ENCODE measurements at regions of chr21 and their contacts with region 1.

Region 1: GRCh38 chr21:34745557-34746255 is 76.9 kb downstream of the CLIC6 start:
- DNase-seq: peak; percentile 74
- ATAC-seq: peak; percentile 99
- H3K4me3 Mint-ChIP-seq: no peak overlapping the region
- H3K27ac Mint-ChIP-seq: no peak overlapping the region
- H3K4me1 Mint-ChIP-seq: peaks cover 3% of the 10 kb centered on the region; the same call in 1 of the 2 replicates
- H3K27me3 Mint-ChIP-seq: no peaks in the 10 kb centered on the region
- CTCF ChIP-seq: peak; percentile 77

Region 2: GRCh38 chr21:34762761-34763160 is 17.1 kb after region 1 on chr21:
- CTCF ChIA-PET with region 1: interaction called, 25 read pairs
- POLR2A ChIA-PET with region 1: no interaction called
- DNase-seq: no peak
- ATAC-seq: no peak
- H3K4me3 Mint-ChIP-seq: no peak overlapping the region
- H3K27ac Mint-ChIP-seq: no peak overlapping the region
- H3K4me1 Mint-ChIP-seq: no peaks in the 10 kb centered on the region
- H3K27me3 Mint-ChIP-seq: peaks cover 2% of the 10 kb centered on the region
- CTCF ChIP-seq: no peak

Region 3: GRCh38 chr21:34795175-34795547 is 49.5 kb after region 1 on chr21:
- CTCF ChIA-PET with region 1: interaction called, 36 read pairs
- POLR2A ChIA-PET with region 1: interaction called, 3 read pairs
- DNase-seq: no peak
- ATAC-seq: no peak
- H3K4me3 Mint-ChIP-seq: no peak overlapping the region
- H3K27ac Mint-ChIP-seq: no peak overlapping the region
- H3K4me1 Mint-ChIP-seq: peaks cover 11% of the 10 kb centered on the region
- H3K27me3 Mint-ChIP-seq: no peaks in the 10 kb centered on the region; the same call in 1 of the 2 replicates
- CTCF ChIP-seq: no peak

Region 4: DNA sequence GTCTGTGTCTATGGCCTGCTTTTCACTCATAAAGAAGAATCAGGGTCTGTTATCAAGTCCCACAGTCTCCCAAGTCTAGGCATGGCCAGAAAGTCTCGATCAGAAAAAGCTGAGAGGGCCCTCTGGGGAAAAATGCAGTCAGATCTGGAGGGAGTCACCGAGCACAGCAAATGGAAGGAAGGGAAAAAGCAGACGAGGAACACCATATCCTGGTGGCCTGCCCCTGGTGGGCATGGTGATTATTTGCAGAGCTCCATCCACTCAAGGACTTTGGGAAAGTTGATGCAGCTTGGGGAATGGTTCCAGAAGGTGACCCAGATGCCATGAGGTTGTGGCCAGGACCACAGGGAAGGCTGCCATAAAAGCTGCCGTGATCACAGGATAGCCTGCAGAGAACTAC is 112.2 kb after region 1 on chr21:
- CTCF ChIA-PET with region 1: interaction called, 14 read pairs
- POLR2A ChIA-PET with region 1: no interaction called
- DNase-seq: no peak
- ATAC-seq: peak; percentile 78
- H3K4me3 Mint-ChIP-seq: no peak overlapping the region
- H3K27ac Mint-ChIP-seq: no peak overlapping the region
- H3K4me1 Mint-ChIP-seq: peaks cover 5% of the 10 kb centered on the region; the same call in 1 of the 2 replicates
- H3K27me3 Mint-ChIP-seq: peaks cover 26% of the 10 kb centered on the region
- CTCF ChIP-seq: no peak

Region 5: GRCh38 chr21:34900376-34900775 is 154.7 kb after region 1 on chr21:
- CTCF ChIA-PET with region 1: interaction called, 10 read pairs
- POLR2A ChIA-PET with region 1: no interaction called
- DNase-seq: no peak
- ATAC-seq: no peak
- H3K4me3 Mint-ChIP-seq: no peak overlapping the region
- H3K27ac Mint-ChIP-seq: no peak overlapping the region
- H3K4me1 Mint-ChIP-seq: peaks cover 7% of the 10 kb centered on the region
- H3K27me3 Mint-ChIP-seq: peaks cover 4% of the 10 kb centered on the region
- CTCF ChIP-seq: no peak

Region 6: GRCh38 chr21:35400233-35400957 is 654.7 kb after region 1 on chr21:
- CTCF ChIA-PET with region 1: interaction called, 11 read pairs
- POLR2A ChIA-PET with region 1: no interaction called
- DNase-seq: no peak
- ATAC-seq: peak; percentile 82
- H3K4me3 Mint-ChIP-seq: no peak overlapping the region
- H3K27ac Mint-ChIP-seq: no peak overlapping the region
- H3K4me1 Mint-ChIP-seq: peaks cover 50% of the 10 kb centered on the region
- H3K27me3 Mint-ChIP-seq: no peaks in the 10 kb centered on the region
- CTCF ChIP-seq: no peak

Region 7: GRCh38 chr21:35840197-35840799 is 1094.6 kb after region 1 on chr21:
- CTCF ChIA-PET with region 1: interaction called, 30 read pairs
- POLR2A ChIA-PET with region 1: no interaction called
- DNase-seq: peak; percentile 45
- ATAC-seq: no peak
- H3K4me3 Mint-ChIP-seq: no peak overlapping the region
- H3K27ac Mint-ChIP-seq: no peak overlapping the region
- H3K4me1 Mint-ChIP-seq: no peaks in the 10 kb centered on the region
- H3K27me3 Mint-ChIP-seq: no peaks in the 10 kb centered on the region
- CTCF ChIP-seq: peak; percentile 69

Measured in WTC11 (cell line).